Heart left ventricle (tissue), 16 donors: ENCODE measurements at regions of chr9 and their contacts with region 1.

Region 1: DNA sequence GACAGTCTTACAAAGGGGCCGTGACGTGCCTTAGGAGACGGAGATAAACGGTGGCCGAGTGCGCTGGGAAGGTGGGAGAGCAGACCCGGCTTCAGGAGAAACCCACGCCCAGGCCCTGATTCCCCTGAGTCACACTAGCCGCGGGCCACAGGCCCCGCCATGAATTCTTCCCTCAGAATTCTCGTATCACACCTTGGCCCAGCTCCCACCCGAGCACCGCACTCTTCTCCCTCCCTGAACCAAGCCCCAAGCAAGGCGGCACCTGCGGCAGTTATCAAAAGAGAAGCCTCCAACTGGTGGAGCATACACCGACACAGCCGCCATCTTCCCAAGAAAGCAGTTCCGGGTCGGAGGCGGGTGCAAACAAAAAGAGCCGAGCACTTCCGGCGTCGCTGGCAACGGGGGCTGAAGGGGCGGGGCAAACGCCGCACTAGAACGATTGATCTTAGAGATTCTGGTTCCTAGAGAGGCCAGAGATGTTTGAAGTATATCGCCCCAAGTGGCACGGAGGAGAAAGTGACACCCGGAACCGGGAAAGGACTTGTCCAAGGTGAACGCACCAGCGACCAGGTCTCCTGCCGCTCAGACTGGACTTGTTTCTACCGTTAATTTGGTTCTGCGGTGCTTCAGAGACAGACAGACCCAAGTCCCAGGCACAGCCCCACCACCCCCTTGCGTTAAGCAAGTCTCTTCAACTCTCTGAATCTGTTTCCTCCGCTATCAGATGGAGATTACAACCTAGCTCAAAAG is at the start of gene PSMB7:
- DNase-seq: peak; percentile 95 to 97 (median 96)
- ATAC-seq: peak; percentile 85 to 98 (median 96)
- H3K4me3 ChIP-seq: peak within 1 kb of the TSS; percentile 25 to 93 (median 84)
- H3K27ac ChIP-seq: peak within 1 kb of the TSS in 8 of 12 donors; percentile 11 to 72 (median 54)
- H3K4me1 ChIP-seq: peaks cover 0 to 28% (median 12%) of the 10 kb centered on the region in 12 donors
- H3K27me3 ChIP-seq: no peaks in the 10 kb centered on the region
- CTCF ChIP-seq: peak; percentile 67 to 98 (median 82)
- POLR2A ChIP-seq: peak in 1 of 2 donors; percentile 44
- total RNA-seq, gene PSMB7: 149 to 273 (median 163) TPM

Region 2: GRCh38 chr9:124370896-124371582 is 44.2 kb before region 1 on chr9:
- intact Hi-C with region 1: no loop called
- DNase-seq: no peak
- ATAC-seq: no peak
- H3K4me3 ChIP-seq: no peak overlapping the region
- H3K27ac ChIP-seq: no peak overlapping the region
- H3K4me1 ChIP-seq: peaks cover 0 to 58% (median 25%) of the 10 kb centered on the region in 12 donors
- H3K27me3 ChIP-seq: no peaks in the 10 kb centered on the region
- CTCF ChIP-seq: no peak
- POLR2A ChIP-seq: no peak

Region 3: DNA sequence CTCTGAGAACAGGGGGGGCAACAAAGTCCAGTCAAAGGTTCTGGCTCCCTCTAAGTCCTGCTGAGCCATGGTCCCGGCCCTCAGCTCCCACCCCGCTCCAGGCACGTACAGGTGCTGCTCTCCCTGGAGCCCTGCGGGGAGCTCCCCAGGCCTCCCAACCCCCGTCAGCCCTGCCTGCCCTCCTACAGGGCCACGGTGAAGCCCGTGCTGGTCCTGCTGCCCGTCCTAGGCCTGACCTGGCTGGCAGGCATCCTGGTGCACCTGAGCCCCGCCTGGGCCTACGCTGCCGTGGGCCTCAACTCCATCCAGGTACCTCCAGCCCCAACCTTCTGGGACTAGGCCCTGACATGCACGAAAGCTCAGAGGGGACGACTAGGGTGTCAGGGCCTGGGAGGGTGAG is 55.0 kb after region 1 on chr9:
- intact Hi-C with region 1: no loop called
- DNase-seq: peak in 2 of 5 donors; percentile 12 to 55
- ATAC-seq: no peak
- H3K4me3 ChIP-seq: no peak overlapping the region
- H3K27ac ChIP-seq: no peak overlapping the region
- H3K4me1 ChIP-seq: no peaks in the 10 kb centered on the region
- H3K27me3 ChIP-seq: peaks cover 0 to 34% (median 0%) of the 10 kb centered on the region in 9 donors
- CTCF ChIP-seq: no peak
- POLR2A ChIP-seq: no peak

Region 4: GRCh38 chr9:124480621-124480981 is 65.3 kb after region 1 on chr9:
- intact Hi-C with region 1: loop called in 3 of 10 experiments (anchors 2 to 5 kb)
- DNase-seq: peak in 2 of 5 donors; percentile 20 to 56
- ATAC-seq: peak in 3 of 4 donors; percentile 41 to 46 (median 42)
- H3K4me3 ChIP-seq: no peak overlapping the region
- H3K27ac ChIP-seq: no peak overlapping the region
- H3K4me1 ChIP-seq: peaks cover 0 to 15% (median 2%) of the 10 kb centered on the region in 12 donors
- H3K27me3 ChIP-seq: peaks cover 13 to 82% (median 36%) of the 10 kb centered on the region in 9 donors
- CTCF ChIP-seq: peak in 9 of 12 donors; percentile 5 to 45 (median 24)
- POLR2A ChIP-seq: no peak

Region 5: GRCh38 chr9:124537926-124538325 is 122.6 kb after region 1 on chr9:
- intact Hi-C with region 1: loop called (anchors 1 to 5 kb)
- DNase-seq: no peak
- ATAC-seq: no peak
- H3K4me3 ChIP-seq: no peak overlapping the region
- H3K27ac ChIP-seq: no peak overlapping the region
- H3K4me1 ChIP-seq: no peaks in the 10 kb centered on the region
- H3K27me3 ChIP-seq: no peaks in the 10 kb centered on the region
- CTCF ChIP-seq: no peak
- POLR2A ChIP-seq: no peak

Region 6: DNA sequence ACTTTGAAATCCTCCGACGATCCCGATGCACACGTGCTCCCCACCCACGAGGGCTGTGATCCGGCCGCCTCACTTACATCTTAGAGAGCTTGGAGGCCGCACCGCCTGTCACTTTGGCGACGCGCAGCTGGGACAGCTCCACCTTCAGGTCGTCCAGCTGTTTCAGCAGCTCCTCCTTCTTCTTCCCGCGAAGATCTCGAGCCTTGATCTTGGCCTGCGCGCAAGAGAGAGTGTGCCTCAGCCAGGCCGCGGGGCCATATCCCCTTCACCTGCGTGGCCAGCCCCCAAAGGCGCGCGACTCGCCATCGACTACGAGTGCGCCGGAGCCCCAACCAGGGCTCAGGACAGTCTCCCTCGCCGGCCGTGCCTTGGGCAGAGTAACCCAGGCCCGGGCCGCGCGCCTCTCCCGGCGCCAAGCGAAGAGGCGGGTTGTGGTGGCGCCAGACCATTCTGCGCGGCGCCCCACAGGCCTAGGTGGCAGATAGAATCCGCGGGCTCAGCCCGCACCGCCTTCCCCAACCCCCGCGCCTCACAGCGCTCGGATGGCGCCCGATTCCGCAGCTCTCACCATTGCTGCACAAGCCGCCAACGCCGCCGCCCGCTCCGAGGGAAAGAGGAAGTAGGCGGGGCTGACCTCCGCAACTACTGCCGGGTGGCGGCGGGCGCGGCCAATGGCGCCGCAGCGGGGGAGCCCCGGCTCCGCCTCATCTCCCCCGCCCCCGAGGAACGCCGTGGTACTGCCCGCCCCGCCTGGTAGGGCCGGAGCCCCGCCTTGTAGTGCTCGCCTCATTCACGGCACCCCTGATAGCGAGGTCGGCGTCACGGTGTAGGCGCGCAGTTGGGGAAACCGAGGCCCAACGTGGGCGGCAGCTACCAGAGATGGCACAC is 446.3 kb after region 1 on chr9 and contains the starts of genes ARPC5L and RPL35:
- intact Hi-C with region 1: loop called in 1 of 10 experiments (anchors 10 kb)
- DNase-seq: peak; percentile 96 to 98 (median 96)
- ATAC-seq: peak; percentile 95 to 97 (median 96)
- H3K4me3 ChIP-seq: peak within 1 kb of the TSS; percentile 71 to 98 (median 84)
- H3K27ac ChIP-seq: peak within 1 kb of the TSS; percentile 81 to 95 (median 92)
- H3K4me1 ChIP-seq: peaks cover 0 to 42% (median 32%) of the 10 kb centered on the region in 12 donors
- H3K27me3 ChIP-seq: no peaks in the 10 kb centered on the region
- CTCF ChIP-seq: peak in 7 of 12 donors; percentile 10 to 45 (median 23)
- POLR2A ChIP-seq: peak in 1 of 2 donors; percentile 93
- total RNA-seq, gene ARPC5L: 27.0 to 56.7 (median 38.3) TPM
- total RNA-seq, gene RPL35: 600 to 1,072 (median 736) TPM